ENCODE measurements at regions of chr14 and their contacts with region 1.

Region 1: GRCh38 chr14:55051426-55052268 is at the start of gene MAPK1IP1L:
- DNase-seq: peak; percentile 83 to 94 (median 89)
- ATAC-seq: peak; percentile 94
- H3K4me3 ChIP-seq: peak within 1 kb of the TSS; percentile 99 to 100
- H3K4me3 Mint-ChIP-seq: peak within 1 kb of the TSS; percentile 88
- H3K27ac ChIP-seq: peak within 1 kb of the TSS; percentile 100
- H3K27ac Mint-ChIP-seq: peak within 1 kb of the TSS; percentile 94
- H3K4me1 ChIP-seq: peaks cover 27% of the 10 kb centered on the region
- H3K4me1 Mint-ChIP-seq: peaks cover 47% of the 10 kb centered on the region
- H3K27me3 ChIP-seq: no peaks in the 10 kb centered on the region
- H3K27me3 Mint-ChIP-seq: no peaks in the 10 kb centered on the region
- CTCF ChIP-seq: peak; percentile 100
- total RNA-seq, gene MAPK1IP1L: 207 to 212 TPM

Region 2: DNA sequence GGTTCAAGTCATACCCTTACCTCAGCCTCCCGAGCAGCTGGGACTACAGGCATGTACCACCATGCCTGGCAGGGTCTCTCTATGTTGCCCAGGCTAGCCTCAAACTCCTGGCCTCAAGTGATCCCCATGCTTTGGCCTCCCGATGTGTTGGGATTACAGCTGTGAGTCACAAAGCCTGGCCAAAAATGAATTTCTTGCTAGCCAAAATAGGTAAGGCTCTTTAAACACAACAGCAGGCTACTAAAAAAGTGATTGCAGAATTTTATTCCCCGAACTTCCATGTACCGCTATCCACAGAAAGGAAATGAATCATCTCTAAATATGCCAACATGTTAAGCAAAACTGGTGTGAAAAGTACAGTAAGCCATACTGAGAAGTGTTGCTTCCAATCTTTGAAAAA is 75.3 kb before region 1 on chr14:
- CTCF ChIA-PET with region 1: no interaction called
- POLR2A ChIA-PET with region 1: no interaction called
- intact Hi-C with region 1: no loop called
- DNase-seq: no peak
- ATAC-seq: no peak
- H3K4me3 ChIP-seq: no peak overlapping the region
- H3K4me3 Mint-ChIP-seq: no peak overlapping the region
- H3K27ac ChIP-seq: no peak overlapping the region
- H3K27ac Mint-ChIP-seq: no peak overlapping the region
- H3K4me1 ChIP-seq: no peaks in the 10 kb centered on the region
- H3K4me1 Mint-ChIP-seq: no peaks in the 10 kb centered on the region
- H3K27me3 ChIP-seq: no peaks in the 10 kb centered on the region
- H3K27me3 Mint-ChIP-seq: no peaks in the 10 kb centered on the region
- CTCF ChIP-seq: no peak

Region 3: DNA sequence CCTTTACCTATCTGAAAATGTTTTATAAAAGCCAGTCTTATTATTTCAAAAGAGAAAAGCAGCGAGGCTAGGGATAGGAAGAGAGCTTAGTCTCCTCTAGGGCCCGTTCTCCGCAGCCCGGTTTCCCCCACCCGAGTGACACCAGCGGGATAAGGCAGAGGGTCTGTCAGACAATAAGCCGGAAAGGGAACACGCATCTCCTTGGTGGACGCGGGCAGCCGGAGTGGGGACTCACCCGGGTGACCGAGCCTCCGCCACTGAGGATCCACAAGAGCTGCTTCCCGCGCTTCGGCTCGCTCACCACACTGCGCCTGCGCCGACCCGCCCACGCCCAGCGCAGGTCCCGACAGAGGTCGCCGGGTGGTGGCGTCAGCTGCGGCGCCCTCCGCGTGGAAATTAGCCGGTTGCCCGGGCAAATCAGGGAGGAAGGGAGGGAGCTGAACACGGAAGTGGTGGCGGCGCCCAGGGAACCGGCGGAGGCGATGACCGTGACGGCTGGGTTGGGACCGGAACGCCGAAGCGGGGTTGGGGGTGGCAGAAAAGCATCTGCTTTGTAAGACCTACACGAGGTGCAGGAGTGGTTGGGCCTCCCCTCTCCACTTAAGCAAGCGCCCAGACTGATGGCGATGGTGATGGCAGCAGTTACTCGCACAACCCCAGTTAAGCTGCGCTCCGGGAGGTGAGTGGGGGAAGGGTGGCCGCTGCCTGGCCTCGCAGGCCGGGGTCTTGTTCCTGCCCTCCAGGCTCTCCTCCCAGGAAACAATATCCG is 24.7 kb before region 1 on chr14 and contains the starts of genes SOCS4 and WDHD1:
- CTCF ChIA-PET with region 1: interaction called, 15 read pairs
- POLR2A ChIA-PET with region 1: interaction called, 24 read pairs
- intact Hi-C with region 1: loop called (anchors 1 kb)
- DNase-seq: peak; percentile 87 to 97 (median 94)
- ATAC-seq: peak; percentile 86
- H3K4me3 ChIP-seq: peak within 1 kb of the TSS; percentile 71 to 91
- H3K4me3 Mint-ChIP-seq: peak within 1 kb of the TSS; percentile 95
- H3K27ac ChIP-seq: peak within 1 kb of the TSS; percentile 80 to 95
- H3K27ac Mint-ChIP-seq: peak within 1 kb of the TSS; percentile 95
- H3K4me1 ChIP-seq: peaks cover 37% of the 10 kb centered on the region
- H3K4me1 Mint-ChIP-seq: peaks cover 54% of the 10 kb centered on the region
- H3K27me3 ChIP-seq: no peaks in the 10 kb centered on the region
- H3K27me3 Mint-ChIP-seq: no peaks in the 10 kb centered on the region
- CTCF ChIP-seq: no peak
- total RNA-seq, gene SOCS4: 22.6 to 24.0 TPM
- total RNA-seq, gene WDHD1: 1.2 to 1.6 TPM

Region 4: DNA sequence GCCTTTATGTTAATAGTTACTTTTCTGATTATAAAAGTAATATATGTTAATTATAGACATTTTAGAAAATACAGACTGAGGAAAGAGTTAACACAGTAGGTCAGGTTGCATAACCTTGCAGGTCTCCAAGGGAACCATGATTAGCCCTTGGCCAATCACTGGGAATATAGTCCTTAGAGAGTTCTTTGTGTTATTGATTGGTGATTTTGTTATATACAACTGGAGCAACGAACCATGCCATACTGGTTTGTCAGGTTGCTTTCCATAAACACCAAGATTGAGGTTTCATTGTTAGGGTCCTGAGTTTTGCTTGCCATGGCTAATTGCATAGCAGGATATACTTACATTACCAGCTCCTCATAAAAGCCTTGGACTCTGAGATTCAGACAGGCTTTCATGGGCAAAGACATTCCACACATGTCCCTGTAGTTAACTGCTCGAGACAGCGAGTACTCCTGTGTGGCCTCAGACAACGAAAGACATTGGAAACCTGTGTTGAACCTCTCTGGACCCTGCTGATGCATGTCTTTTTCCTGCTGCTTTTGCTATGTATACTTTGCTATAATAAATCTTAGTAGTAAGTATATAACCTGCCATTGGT is 33.5 kb after region 1 on chr14:
- CTCF ChIA-PET with region 1: interaction called, 4 read pairs
- POLR2A ChIA-PET with region 1: interaction called, 4 read pairs
- intact Hi-C with region 1: loop called (anchors 1 to 2 kb)
- DNase-seq: peak in 1 of 9 experiments; percentile 5
- ATAC-seq: no peak
- H3K4me3 ChIP-seq: no peak overlapping the region
- H3K4me3 Mint-ChIP-seq: no peak overlapping the region
- H3K27ac ChIP-seq: no peak overlapping the region
- H3K27ac Mint-ChIP-seq: no peak overlapping the region
- H3K4me1 ChIP-seq: no peaks in the 10 kb centered on the region
- H3K4me1 Mint-ChIP-seq: peaks cover 3% of the 10 kb centered on the region
- H3K27me3 ChIP-seq: no peaks in the 10 kb centered on the region
- H3K27me3 Mint-ChIP-seq: no peaks in the 10 kb centered on the region
- CTCF ChIP-seq: no peak

Region 5: DNA sequence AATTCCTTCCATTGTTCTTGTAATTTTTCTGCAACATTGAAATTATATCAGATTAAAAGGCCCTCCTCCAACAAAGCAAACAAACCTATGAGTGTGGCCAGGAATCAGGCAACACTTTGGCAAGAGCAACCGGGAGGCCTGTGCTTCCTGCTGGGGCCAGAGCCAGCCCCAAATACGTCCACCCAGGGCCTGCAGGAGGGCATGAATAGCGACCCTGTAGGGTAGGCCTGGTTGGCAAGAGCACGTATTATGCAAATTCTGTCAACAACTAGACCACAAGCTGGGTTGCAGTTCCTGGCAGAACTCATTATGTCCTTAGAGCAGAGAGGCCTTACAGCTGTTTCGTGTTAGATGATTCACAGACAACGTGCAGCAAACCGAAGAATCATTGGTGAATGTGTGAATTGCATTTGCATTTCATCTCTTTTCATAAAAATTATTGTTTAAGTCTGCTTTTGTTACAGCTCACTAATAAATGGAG is 50.5 kb after region 1 on chr14:
- CTCF ChIA-PET with region 1: interaction called, 13 read pairs
- POLR2A ChIA-PET with region 1: interaction called, 7 read pairs
- intact Hi-C with region 1: no loop called
- DNase-seq: peak in 8 of 9 experiments; percentile 25 to 82 (median 58)
- ATAC-seq: peak; percentile 74
- H3K4me3 ChIP-seq: no peak overlapping the region
- H3K4me3 Mint-ChIP-seq: no peak overlapping the region
- H3K27ac ChIP-seq: peak overlapping the region; percentile 18 to 81
- H3K27ac Mint-ChIP-seq: peak overlapping the region; percentile 96
- H3K4me1 ChIP-seq: peaks cover 38% of the 10 kb centered on the region
- H3K4me1 Mint-ChIP-seq: peaks cover 50% of the 10 kb centered on the region
- H3K27me3 ChIP-seq: no peaks in the 10 kb centered on the region
- H3K27me3 Mint-ChIP-seq: no peaks in the 10 kb centered on the region
- CTCF ChIP-seq: no peak

Region 6: GRCh38 chr14:55339770-55340169 is 288.1 kb after region 1 on chr14:
- CTCF ChIA-PET with region 1: no interaction called
- POLR2A ChIA-PET with region 1: no interaction called
- intact Hi-C with region 1: no loop called
- DNase-seq: peak in 2 of 9 experiments; percentile 19 to 26
- ATAC-seq: no peak
- H3K4me3 ChIP-seq: no peak overlapping the region
- H3K4me3 Mint-ChIP-seq: no peak overlapping the region
- H3K27ac ChIP-seq: no peak overlapping the region
- H3K27ac Mint-ChIP-seq: peak overlapping the region; percentile 24
- H3K4me1 ChIP-seq: peaks cover 35% of the 10 kb centered on the region
- H3K4me1 Mint-ChIP-seq: peaks cover 64% of the 10 kb centered on the region
- H3K27me3 ChIP-seq: no peaks in the 10 kb centered on the region
- H3K27me3 Mint-ChIP-seq: no peaks in the 10 kb centered on the region
- CTCF ChIP-seq: no peak

Region 7: DNA sequence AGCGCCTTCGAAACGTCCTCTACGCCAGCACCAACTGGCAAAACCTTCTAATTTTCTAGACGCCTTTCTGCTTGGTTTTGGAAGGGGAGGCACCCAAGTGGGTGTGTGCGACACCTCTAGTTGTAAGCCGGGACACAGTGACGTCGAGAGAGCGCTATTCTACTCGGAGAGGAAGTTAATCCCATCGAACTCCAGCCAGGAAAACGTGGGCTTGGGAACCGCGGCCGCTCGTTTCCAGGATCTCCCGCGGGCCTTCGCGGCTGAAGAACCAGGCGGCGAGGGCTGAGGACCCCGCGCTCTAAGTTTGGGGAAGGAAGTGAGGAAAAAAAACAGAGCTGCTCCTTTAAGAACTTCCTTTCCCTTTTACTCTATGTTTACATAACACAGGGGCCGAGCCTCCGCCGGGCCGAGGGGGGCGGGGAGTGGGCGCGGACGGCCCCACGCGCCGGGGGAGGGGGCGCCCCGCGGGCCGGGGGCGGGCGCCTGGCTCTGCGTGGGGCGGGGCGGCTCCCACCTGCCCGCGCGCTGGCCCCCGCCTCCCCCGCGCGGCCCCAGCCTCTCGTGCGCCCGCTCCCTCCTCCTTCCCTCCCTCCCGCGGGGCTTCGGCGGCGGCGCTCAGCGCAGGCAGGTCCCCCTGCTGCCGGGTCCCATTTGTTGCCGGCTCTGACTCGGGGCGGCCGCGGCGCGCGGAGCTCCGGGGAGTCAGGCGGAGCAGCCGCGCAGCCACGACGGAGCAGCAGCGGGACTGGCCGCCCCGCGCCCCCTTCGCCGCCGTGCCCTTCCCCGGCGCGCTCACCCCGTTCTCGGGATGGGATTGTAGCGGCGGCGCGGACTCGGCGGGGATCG is 1066.3 kb after region 1 on chr14 and contains the start of gene PELI2:
- CTCF ChIA-PET with region 1: no interaction called
- POLR2A ChIA-PET with region 1: no interaction called
- intact Hi-C with region 1: loop called in 1 of 2 experiments (anchors 10 kb)
- DNase-seq: peak; percentile 66 to 94 (median 82)
- ATAC-seq: peak; percentile 86
- H3K4me3 ChIP-seq: peak within 1 kb of the TSS; percentile 73 to 74
- H3K4me3 Mint-ChIP-seq: peak within 1 kb of the TSS; percentile 95
- H3K27ac ChIP-seq: peak within 1 kb of the TSS; percentile 67 to 92
- H3K27ac Mint-ChIP-seq: peak within 1 kb of the TSS; percentile 99
- H3K4me1 ChIP-seq: peaks cover 34% of the 10 kb centered on the region
- H3K4me1 Mint-ChIP-seq: peaks cover 49% of the 10 kb centered on the region
- H3K27me3 ChIP-seq: no peaks in the 10 kb centered on the region
- H3K27me3 Mint-ChIP-seq: peaks cover 4% of the 10 kb centered on the region
- CTCF ChIP-seq: no peak
- total RNA-seq, gene PELI2: 13.3 to 15.1 TPM